ENCODE measurements at regions of chr3 and their contacts with region 1.

Region 1: DNA sequence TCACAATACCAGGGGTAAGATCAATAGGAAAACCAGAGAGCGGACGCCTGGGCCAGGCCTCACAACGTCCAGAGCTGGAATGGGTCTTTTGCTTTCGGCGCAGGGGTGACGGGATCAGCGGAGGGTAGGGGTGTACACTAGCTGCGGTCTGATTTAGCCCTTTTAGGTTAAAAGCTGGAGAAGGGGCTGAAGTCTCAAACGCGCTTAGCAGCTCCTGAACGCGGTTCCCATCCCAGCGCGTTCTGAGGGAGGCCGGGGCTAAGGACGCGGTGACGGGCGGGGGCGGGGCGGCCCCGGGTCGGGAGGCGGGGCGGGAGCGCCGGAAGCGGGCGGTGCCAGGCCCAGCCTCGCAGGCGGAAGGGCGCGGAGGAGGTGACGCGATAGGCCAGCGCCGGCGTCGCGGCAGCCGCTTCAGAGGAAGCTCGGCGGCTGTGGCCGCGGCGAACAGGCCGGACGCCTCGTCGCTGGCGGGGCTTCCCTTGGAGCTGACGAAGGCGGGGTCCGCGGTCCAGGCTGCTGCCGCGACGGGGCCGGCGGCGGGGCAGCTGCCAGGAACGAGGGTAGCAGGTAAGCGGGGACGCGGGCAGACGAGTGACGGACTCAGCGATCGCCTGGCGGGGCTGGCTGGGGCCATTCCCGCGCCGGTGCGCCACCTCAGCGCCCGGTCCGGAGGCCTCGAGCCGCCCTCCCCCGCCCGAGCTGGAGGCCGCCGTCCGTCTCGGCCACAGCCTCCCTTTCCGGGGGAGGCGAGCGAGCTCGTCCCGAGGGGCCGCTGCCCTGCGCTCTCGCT is at the start of gene SENP5:
- DNase-seq: peak; percentile 92
- H3K4me3 Mint-ChIP-seq: peak within 1 kb of the TSS; percentile 97
- H3K27ac Mint-ChIP-seq: peak within 1 kb of the TSS; percentile 91
- H3K4me1 Mint-ChIP-seq: peaks cover 31% of the 10 kb centered on the region
- H3K27me3 Mint-ChIP-seq: no peaks in the 10 kb centered on the region
- total RNA-seq, gene SENP5: 24.1 to 24.4 TPM

Region 2: GRCh38 chr3:196559826-196560225 is 307.9 kb before region 1 on chr3:
- CTCF ChIA-PET with region 1: no interaction called
- intact Hi-C with region 1: no loop called
- DNase-seq: no peak
- H3K4me3 Mint-ChIP-seq: no peak overlapping the region
- H3K27ac Mint-ChIP-seq: peak overlapping the region; percentile 8
- H3K4me1 Mint-ChIP-seq: peaks cover 29% of the 10 kb centered on the region
- H3K27me3 Mint-ChIP-seq: no peaks in the 10 kb centered on the region

Region 3: DNA sequence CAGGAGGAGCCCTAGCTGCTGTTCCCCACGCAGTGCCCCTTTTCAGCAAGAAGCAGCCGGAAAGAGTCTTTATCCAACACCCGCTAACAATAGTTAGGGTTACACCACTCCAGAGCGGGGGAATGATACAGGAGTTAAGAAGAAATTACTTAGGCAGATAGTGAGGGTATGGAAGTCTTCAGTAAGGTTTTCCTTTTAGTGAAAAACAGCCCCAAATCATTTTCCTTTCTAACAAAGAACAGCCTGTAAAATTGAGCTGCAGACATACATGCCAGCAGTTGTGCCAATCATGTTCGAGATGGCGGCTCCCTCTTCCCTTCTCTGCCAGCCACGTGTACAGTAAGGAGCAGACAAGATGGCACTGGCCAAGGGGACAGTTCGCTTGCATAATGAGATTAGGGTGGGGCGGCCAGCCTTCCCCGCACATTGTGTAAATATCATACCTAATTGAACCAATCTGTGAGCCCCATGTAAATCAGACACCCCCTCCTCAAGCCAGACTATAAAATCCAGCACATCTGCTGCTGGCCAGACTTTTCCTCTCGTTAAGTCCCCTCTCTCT is 18.4 kb before region 1 on chr3:
- CTCF ChIA-PET with region 1: interaction called, 10 read pairs
- intact Hi-C with region 1: no loop called
- DNase-seq: no peak
- H3K4me3 Mint-ChIP-seq: no peak overlapping the region
- H3K27ac Mint-ChIP-seq: no peak overlapping the region
- H3K4me1 Mint-ChIP-seq: no peaks in the 10 kb centered on the region
- H3K27me3 Mint-ChIP-seq: peaks cover 6% of the 10 kb centered on the region